WTC11 (cell line): ENCODE measurements at regions of chr16 and their contacts with region 1.

Region 1: GRCh38 chr16:53743149-53743566 is 39.2 kb downstream of the FTO start:
- DNase-seq: peak; percentile 21
- ATAC-seq: peak; percentile 57; the same call in 1 of the 2 replicates
- H3K4me3 Mint-ChIP-seq: no peak overlapping the region
- H3K27ac Mint-ChIP-seq: no peak overlapping the region
- H3K4me1 Mint-ChIP-seq: peaks cover 27% of the 10 kb centered on the region
- H3K27me3 Mint-ChIP-seq: no peaks in the 10 kb centered on the region
- CTCF ChIP-seq: peak; percentile 49

Region 2: DNA sequence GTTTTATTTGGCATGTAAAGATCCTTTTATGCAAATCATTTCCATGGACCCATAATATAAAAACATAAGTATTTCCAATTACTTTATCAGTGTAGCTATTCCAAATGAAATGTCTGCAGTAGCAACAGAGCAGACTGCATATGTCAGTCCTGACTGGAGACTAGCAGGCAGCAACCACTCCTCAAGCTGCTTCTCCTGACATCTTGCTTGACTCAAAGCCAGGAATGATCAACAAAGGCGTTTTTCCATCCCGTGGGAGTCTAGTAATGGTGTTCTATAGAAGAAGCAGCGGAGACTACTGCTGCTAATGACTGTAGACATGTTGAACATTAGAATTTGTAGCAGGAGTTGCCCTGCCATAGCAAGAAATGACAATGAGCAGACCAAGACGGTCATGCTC is 166.9 kb before region 1 on chr16:
- CTCF ChIA-PET with region 1: no interaction called
- POLR2A ChIA-PET with region 1: no interaction called
- DNase-seq: no peak
- ATAC-seq: no peak
- H3K4me3 Mint-ChIP-seq: no peak overlapping the region
- H3K27ac Mint-ChIP-seq: no peak overlapping the region
- H3K4me1 Mint-ChIP-seq: no peaks in the 10 kb centered on the region
- H3K27me3 Mint-ChIP-seq: no peaks in the 10 kb centered on the region; the same call in 1 of the 2 replicates
- CTCF ChIP-seq: no peak

Region 3: DNA sequence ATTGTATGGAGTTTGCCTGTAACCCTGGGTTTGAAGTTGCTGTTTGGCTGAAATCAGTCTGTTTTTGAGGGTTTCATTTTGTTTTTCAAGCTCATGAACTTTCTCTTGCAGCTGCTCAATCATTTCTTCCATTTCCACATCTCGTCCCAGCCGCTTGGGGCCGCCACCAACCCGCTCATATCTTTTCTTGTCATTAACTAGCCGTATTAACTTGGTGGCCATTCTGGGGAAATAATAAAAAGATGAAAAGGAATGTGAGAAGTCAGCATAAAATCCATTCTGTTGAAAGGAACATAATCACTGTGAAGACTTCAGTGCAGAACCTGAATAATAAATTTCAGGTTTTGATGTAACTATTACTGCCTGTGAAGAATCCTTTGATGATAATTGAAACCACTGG is 51.0 kb before region 1 on chr16:
- CTCF ChIA-PET with region 1: interaction called, 10 read pairs
- POLR2A ChIA-PET with region 1: no interaction called
- DNase-seq: peak; percentile 49
- ATAC-seq: peak; percentile 24; the same call in 1 of the 2 replicates
- H3K4me3 Mint-ChIP-seq: no peak overlapping the region
- H3K27ac Mint-ChIP-seq: no peak overlapping the region; the same call in 1 of the 2 replicates
- H3K4me1 Mint-ChIP-seq: no peaks in the 10 kb centered on the region
- H3K27me3 Mint-ChIP-seq: no peaks in the 10 kb centered on the region
- CTCF ChIP-seq: no peak

Region 4: DNA sequence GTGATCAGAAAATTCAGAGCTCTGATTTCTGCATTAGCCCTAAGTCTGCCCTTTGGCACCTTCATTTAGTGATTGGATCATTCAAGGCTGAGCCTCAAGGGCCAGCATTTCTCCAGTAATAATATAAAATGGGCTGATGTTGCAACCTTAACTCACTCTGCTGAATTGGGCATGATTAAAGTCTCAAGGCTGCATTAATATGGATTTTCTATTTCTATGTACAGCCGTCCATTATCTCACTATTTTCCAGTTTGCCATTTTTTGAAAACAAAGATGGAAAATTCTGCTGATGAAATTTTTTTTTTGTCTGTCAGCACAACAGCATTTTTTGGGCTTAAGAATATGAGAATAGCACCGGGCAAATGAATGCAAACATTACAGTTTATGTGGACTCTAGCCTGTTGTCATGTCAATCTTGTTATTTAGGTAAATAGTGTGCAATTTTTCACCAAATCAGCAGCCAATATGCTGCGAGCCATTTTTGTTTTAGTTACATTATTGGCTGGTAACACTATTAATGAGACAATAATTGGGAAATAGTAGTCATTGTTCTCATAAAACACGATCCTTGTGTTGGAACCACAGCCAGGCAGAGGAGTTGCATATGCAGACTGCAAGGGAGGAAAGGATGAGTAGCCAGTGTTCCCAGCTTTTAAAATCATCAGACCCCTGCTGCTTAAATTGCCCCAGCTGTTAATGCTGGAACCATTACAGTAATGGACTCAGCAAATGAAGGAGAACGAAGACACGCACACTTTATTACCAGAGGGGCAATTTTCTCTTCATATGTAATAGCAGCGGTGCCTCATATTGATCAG is 28.7 kb before region 1 on chr16:
- CTCF ChIA-PET with region 1: no interaction called
- POLR2A ChIA-PET with region 1: no interaction called
- DNase-seq: no peak
- ATAC-seq: peak; percentile 36; the same call in 1 of the 2 replicates
- H3K4me3 Mint-ChIP-seq: no peak overlapping the region
- H3K27ac Mint-ChIP-seq: no peak overlapping the region
- H3K4me1 Mint-ChIP-seq: peaks cover 24% of the 10 kb centered on the region
- H3K27me3 Mint-ChIP-seq: no peaks in the 10 kb centered on the region
- CTCF ChIP-seq: no peak

Region 5: DNA sequence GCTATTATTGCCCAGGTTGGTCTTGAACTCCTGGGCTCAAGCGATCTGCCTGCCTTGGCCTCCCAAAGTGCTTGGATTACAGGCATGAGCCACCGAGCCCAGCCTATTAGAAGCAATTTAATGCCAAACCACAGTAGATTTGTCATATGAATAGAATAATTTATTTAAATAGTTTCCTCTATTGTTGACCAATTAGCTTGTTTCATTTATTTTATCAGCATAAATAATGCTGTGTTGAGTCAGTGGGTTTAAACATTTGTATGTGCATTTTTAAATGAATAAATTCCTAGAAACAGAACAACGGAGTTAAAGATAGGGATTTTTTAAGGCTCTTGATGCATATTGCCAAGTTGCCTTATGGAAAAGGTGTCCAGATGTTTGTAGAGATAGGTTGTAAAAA is 12.5 kb before region 1 on chr16:
- CTCF ChIA-PET with region 1: interaction called, 13 read pairs
- POLR2A ChIA-PET with region 1: no interaction called
- DNase-seq: no peak
- ATAC-seq: no peak
- H3K4me3 Mint-ChIP-seq: no peak overlapping the region
- H3K27ac Mint-ChIP-seq: no peak overlapping the region
- H3K4me1 Mint-ChIP-seq: peaks cover 2% of the 10 kb centered on the region; the same call in 1 of the 2 replicates
- H3K27me3 Mint-ChIP-seq: no peaks in the 10 kb centered on the region
- CTCF ChIP-seq: no peak

Region 6: DNA sequence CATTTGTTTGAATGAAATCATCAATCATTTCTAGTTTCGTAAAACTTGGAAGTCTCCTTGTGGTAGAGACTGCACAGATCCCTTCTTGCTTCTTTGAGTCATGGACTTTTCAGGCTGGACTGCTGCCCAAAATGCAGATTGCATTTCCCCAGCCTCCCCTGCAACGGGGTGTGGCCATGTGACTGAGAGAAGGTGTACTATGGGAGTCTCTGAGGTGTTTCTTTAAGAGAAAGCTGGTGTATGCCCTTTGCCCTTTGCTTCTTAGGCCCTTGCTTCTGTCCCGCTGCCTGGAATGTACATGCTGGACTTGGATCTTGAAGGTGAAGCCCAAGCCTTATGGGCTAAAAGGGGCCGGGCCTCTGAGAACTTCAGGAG is 12.4 kb after region 1 on chr16:
- CTCF ChIA-PET with region 1: interaction called, 53 read pairs
- POLR2A ChIA-PET with region 1: interaction called, 3 read pairs
- DNase-seq: no peak
- ATAC-seq: no peak
- H3K4me3 Mint-ChIP-seq: no peak overlapping the region
- H3K27ac Mint-ChIP-seq: no peak overlapping the region
- H3K4me1 Mint-ChIP-seq: peaks cover 16% of the 10 kb centered on the region
- H3K27me3 Mint-ChIP-seq: no peaks in the 10 kb centered on the region; the same call in 1 of the 2 replicates
- CTCF ChIP-seq: no peak

Region 7: DNA sequence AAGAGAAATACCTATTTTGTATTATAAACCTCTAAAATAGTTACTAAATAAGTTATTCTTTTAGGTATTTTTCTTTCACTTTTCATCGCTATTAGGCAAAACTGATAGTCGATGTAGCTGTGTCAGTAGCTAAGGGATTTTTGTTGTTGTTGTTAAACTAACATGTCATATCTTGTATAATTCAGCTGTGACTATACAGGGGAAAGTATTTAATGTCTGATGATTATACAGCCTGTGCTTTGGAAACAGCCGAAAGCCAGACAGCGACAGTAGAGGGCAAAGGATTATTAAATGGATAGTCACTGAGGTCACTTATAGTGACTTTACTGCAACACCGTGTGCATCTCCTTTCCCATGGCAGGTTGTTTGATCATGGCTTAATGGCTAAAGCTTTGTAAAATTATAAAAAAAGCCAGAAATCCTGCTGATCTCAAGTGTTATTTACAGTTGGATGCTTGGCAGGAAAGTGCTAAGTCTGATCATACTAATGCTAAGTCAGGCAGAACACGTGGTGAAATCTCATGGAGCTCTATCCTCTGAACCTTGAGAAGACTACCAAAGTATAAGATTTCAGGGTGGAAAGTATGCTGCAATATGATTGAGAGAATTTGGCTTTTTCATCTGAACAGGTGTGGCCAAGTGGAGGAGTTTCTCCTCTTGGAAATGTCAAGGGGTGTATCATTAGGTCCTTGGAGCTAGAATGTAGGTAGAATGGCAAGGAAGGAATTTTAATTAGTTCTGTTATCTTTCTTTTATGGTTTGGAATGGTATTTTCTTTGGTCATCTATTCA is 49.2 kb after region 1 on chr16:
- CTCF ChIA-PET with region 1: no interaction called
- POLR2A ChIA-PET with region 1: no interaction called
- DNase-seq: no peak
- ATAC-seq: no peak
- H3K4me3 Mint-ChIP-seq: no peak overlapping the region
- H3K27ac Mint-ChIP-seq: no peak overlapping the region
- H3K4me1 Mint-ChIP-seq: peaks cover 9% of the 10 kb centered on the region
- H3K27me3 Mint-ChIP-seq: no peaks in the 10 kb centered on the region
- CTCF ChIP-seq: no peak